Endothelial cell of umbilical vein (primary cell): ENCODE measurements at regions of chr3 and their contacts with region 1.

Region 1: GRCh38 chr3:7504886-7505775 is 644.2 kb downstream of the GRM7 start:
- DNase-seq: peak; percentile 99
- H3K4me3 ChIP-seq: no peak overlapping the region
- H3K27ac ChIP-seq: peak overlapping the region; percentile 98
- H3K4me1 ChIP-seq: peaks cover 34% of the 10 kb centered on the region
- H3K27me3 ChIP-seq: no peaks in the 10 kb centered on the region
- CTCF ChIP-seq: peak in 1 of 2 donors; percentile 29
- POLR2A ChIP-seq: no peak

Region 2: GRCh38 chr3:7309641-7310102 is 195.5 kb before region 1 on chr3:
- CTCF ChIA-PET with region 1: interaction called, 5 read pairs
- POLR2A ChIA-PET with region 1: no interaction called
- dilution Hi-C with region 1: no loop called
- intact Hi-C with region 1: loop called (anchors 1 kb)
- DNase-seq: peak; percentile 98
- H3K4me3 ChIP-seq: no peak overlapping the region
- H3K27ac ChIP-seq: peak overlapping the region; percentile 96
- H3K4me1 ChIP-seq: peaks cover 55% of the 10 kb centered on the region
- H3K27me3 ChIP-seq: no peaks in the 10 kb centered on the region
- CTCF ChIP-seq: no peak
- POLR2A ChIP-seq: no peak

Region 3: DNA sequence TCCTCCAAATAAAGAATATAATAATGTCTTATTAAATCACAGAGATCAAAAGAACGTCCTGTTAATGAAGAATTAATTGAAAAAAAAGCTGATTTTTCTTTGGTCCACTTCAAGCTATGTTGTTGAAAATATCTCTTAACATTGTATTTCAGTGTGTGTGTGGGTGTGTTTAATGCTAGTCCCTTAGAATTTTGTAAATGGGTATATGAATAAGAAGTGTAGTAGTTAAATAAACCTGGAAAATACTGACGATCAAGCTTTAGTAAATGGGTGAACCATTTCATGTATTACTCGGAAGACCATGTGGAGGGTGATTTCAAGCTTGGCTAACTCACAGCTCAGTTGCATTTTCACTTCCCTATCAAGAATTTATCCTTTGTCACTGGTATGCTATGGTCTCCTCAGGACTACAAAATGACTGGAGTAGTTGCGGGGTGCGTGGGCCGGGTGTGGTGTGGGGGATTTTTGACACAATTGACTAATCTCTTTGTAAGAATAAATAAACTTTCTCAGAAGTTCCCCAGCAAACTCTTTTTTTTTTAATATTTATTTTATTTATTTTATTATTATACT is 57.8 kb before region 1 on chr3:
- CTCF ChIA-PET with region 1: no interaction called
- POLR2A ChIA-PET with region 1: no interaction called
- dilution Hi-C with region 1: no loop called
- intact Hi-C with region 1: loop called (anchors 1 kb)
- DNase-seq: no peak
- H3K4me3 ChIP-seq: no peak overlapping the region
- H3K27ac ChIP-seq: no peak overlapping the region
- H3K4me1 ChIP-seq: peaks cover 14% of the 10 kb centered on the region
- H3K27me3 ChIP-seq: no peaks in the 10 kb centered on the region
- CTCF ChIP-seq: no peak
- POLR2A ChIP-seq: no peak

Region 4: GRCh38 chr3:7546253-7546652 is 41.1 kb after region 1 on chr3:
- CTCF ChIA-PET with region 1: interaction called, 4 read pairs
- POLR2A ChIA-PET with region 1: no interaction called
- dilution Hi-C with region 1: no loop called
- intact Hi-C with region 1: loop called (anchors 1 kb)
- DNase-seq: peak; percentile 79
- H3K4me3 ChIP-seq: no peak overlapping the region
- H3K27ac ChIP-seq: no peak overlapping the region
- H3K4me1 ChIP-seq: no peaks in the 10 kb centered on the region
- H3K27me3 ChIP-seq: no peaks in the 10 kb centered on the region
- CTCF ChIP-seq: peak; percentile 6 to 13
- POLR2A ChIP-seq: no peak

Region 5: DNA sequence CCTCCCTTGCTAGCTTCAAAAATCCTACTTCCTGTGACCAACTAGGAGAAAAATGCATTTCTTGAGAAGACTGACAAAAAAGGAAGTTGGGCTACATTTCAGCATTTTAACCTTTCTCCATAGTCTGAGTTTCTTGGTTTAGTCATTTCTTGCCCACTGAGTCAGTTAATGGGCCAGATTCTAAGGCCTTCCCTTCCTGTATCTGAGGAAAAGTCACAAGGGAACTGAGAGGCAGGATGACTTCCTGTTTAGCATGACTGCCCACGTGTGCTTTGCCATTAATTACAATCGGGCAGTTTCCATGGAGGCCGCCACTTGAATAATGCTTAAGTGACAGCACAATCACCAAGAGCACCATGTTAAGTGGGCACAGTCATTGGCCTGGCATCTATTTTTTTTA is 202.1 kb after region 1 on chr3:
- CTCF ChIA-PET with region 1: interaction called, 4 read pairs
- POLR2A ChIA-PET with region 1: no interaction called
- dilution Hi-C with region 1: no loop called
- intact Hi-C with region 1: loop called (anchors 1 kb)
- DNase-seq: peak; percentile 74
- H3K4me3 ChIP-seq: no peak overlapping the region
- H3K27ac ChIP-seq: peak overlapping the region; percentile 95
- H3K4me1 ChIP-seq: peaks cover 55% of the 10 kb centered on the region
- H3K27me3 ChIP-seq: no peaks in the 10 kb centered on the region
- CTCF ChIP-seq: no peak
- POLR2A ChIP-seq: peak; percentile 22

Region 6: DNA sequence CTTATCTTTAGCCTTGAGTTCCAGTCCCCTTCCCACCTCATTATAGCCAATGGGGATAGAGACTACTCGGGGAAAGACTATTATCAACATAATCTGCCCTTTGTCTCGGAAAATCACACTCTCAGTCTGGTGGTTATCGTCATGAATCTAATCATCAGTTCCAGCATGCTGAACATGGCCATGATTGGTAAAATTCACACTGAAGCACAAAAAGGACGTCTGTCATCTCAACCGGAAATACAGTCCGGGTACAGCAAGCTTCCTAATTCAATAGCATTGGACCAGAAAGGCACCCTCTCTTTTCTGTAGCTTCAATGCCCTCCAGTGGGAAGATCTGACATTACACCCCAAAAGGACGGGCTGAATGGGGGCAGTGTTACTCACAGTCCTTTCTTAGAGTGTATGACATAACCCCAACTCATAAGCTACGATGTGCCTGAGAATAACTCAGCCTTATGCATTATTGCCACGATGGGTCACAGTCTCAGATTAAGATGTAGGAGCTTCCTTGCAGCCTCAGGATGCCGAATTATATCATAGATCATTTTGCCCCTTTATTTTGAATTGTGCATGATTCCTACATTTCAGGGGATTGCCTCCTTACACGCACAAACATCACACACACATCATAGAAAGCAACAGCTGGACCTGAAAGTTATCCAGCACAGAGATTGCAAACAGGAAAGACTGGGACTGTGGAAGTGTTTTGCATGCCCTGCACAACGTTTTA is 606.1 kb after region 1 on chr3:
- CTCF ChIA-PET with region 1: interaction called, 4 read pairs
- POLR2A ChIA-PET with region 1: no interaction called
- dilution Hi-C with region 1: no loop called
- intact Hi-C with region 1: loop called (anchors 1 kb)
- DNase-seq: peak; percentile 91
- H3K4me3 ChIP-seq: peak overlapping the region in 2 of 3 experiments; percentile 31 to 43
- H3K27ac ChIP-seq: peak overlapping the region; percentile 37
- H3K4me1 ChIP-seq: peaks cover 6% of the 10 kb centered on the region
- H3K27me3 ChIP-seq: no peaks in the 10 kb centered on the region
- CTCF ChIP-seq: peak; percentile 67 to 82
- POLR2A ChIP-seq: no peak